Activated CD4-positive, alpha-beta memory T cell treated with anti-CD3 and anti-CD28 coated beads for 36 hours (primary cell): ENCODE measurements at regions of chr7 and their contacts with region 1.

Region 1: GRCh38 chr7:42940985-42941847 is 9.0 kb downstream of the MRPL32 start:
- DNase-seq: peak; percentile 84
- H3K4me3 Mint-ChIP-seq: no peak overlapping the region
- H3K27ac Mint-ChIP-seq: no peak overlapping the region
- H3K4me1 Mint-ChIP-seq: peaks cover 39% of the 10 kb centered on the region
- H3K27me3 Mint-ChIP-seq: no peaks in the 10 kb centered on the region

Region 2: DNA sequence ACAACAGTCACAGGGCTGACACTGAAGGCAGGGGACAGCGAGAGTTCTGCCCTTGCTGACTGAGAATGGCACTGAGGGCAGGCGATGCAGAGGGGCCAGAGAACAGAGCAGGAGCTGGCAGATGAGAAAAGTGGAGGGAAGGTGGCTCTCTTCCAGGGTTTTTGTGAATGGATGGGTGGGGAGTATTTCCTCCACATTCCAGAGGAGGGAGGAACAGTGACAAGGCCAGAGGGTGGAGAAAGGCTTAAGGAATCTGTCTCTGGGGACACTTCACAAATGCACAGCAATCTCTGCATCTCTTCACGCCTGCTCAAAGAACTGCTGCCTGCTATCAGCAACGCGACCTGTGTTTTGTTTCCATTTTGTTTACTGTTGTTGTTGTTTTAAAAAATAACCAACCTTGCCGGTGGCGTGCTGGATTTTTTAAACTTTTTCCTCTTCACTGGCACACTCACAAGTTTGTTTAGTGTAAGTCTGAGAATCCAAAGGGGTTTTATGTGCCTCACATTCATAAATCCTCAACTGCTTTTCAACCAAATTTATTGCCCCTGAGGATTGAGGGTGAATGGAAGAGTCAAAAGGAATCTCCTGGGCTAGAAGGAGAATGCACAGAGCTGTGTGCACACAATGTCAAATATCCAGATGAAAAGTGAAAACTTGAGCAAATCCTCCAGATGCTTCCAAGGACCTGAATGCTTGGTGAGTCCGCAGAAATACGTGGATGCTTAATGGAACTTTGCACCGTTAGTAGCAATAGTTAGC is 833.6 kb before region 1 on chr7:
- CTCF ChIA-PET with region 1: no interaction called
- POLR2A ChIA-PET with region 1: no interaction called
- intact Hi-C with region 1: no loop called
- DNase-seq: no peak
- H3K4me3 Mint-ChIP-seq: no peak overlapping the region
- H3K27ac Mint-ChIP-seq: no peak overlapping the region
- H3K4me1 Mint-ChIP-seq: no peaks in the 10 kb centered on the region
- H3K27me3 Mint-ChIP-seq: no peaks in the 10 kb centered on the region

Region 3: DNA sequence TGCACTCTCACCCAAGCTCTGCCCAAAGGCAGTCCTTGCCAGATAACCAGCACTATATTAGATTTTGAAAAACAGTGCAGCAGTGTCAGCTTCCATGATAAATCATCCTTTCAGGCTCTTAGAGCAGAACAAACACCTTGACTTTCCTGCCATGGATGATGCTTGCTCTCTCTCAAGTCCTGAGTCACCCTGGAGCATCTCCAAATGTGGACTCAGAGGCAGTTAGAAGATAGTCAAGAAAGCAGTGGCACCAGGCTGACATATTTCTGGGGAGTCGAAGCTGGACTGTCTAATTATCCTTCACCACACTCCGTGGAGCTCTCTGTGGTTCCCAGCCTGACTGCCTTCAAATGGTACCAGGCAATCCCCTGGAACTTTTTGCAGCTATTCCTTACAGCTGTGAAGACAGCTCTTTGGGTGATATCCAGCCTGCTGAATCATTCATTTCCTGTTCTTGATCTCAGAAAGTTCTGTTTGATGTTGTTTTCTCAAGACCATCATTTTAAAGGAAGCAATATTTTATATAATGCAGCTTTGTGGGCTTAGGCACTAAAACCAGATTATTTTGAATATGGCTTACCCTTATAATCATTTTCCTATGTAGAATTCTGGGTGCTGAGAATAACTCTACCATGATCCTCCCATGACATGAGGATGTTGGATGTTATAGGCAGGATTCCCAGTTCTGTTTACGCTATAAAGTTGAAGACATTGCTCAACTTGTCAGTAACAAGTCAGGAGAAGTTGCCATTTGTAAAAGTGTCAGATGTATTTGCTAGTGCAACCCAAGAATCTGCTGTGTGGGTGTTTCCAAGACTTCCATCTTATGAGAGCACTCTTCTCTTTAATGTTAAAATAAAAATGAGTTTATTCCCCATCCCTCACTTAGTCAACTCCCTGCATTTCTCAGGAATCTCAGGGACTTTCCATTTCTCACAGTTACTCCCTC is 263.2 kb before region 1 on chr7:
- CTCF ChIA-PET with region 1: no interaction called
- POLR2A ChIA-PET with region 1: no interaction called
- intact Hi-C with region 1: no loop called
- DNase-seq: no peak
- H3K4me3 Mint-ChIP-seq: no peak overlapping the region
- H3K27ac Mint-ChIP-seq: no peak overlapping the region
- H3K4me1 Mint-ChIP-seq: no peaks in the 10 kb centered on the region
- H3K27me3 Mint-ChIP-seq: no peaks in the 10 kb centered on the region

Region 4: GRCh38 chr7:43108255-43109011 is 167.2 kb after region 1 on chr7:
- CTCF ChIA-PET with region 1: interaction called, 3 read pairs
- POLR2A ChIA-PET with region 1: no interaction called
- intact Hi-C with region 1: loop called (anchors 1 kb)
- DNase-seq: peak; percentile 73
- H3K4me3 Mint-ChIP-seq: no peak overlapping the region
- H3K27ac Mint-ChIP-seq: no peak overlapping the region
- H3K4me1 Mint-ChIP-seq: peaks cover 2% of the 10 kb centered on the region
- H3K27me3 Mint-ChIP-seq: peaks cover 42% of the 10 kb centered on the region

Region 5: DNA sequence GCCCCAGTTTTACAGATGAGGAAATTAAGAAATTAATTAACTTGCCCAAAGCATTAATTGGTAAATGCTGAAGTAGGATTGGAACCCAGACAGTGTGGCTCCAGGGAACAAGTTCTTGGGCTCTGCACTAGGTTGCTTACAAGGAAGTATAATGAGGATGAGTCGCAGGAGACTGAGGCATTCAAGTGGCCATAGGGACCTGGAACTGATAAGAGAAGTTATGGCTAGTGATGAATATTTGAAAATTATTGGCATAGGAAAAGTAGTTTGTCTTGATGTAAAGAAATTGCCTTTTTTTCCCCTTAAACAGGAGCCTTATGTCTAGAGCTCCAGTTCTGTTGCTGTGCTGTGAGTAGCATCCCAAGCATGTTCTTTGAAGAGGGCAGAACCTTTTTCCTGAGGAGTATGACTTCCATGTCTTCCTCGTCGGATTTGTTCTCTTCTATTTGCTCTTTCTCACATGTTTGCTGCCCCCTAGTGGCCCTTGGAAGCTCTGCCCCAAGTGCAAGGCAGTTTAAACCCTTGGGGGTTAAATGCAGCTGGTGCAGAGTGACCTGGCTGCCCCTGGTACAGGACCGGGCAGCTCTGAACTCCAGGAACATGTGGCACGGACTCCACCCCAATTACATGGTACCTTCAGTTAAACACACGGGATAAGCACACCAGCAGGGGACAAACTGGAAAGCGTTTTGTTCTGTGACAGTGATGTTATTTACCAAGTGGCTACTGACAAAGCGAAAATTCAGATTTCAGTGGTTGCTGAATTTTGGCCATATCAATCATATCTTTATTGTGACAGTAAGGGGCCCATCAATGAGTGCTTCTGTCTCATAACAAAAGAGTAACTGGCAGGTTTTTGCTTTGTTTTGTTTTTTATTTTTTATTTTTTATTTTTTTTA is 320.0 kb after region 1 on chr7:
- CTCF ChIA-PET with region 1: interaction called, 25 read pairs
- POLR2A ChIA-PET with region 1: no interaction called
- intact Hi-C with region 1: loop called (anchors 1 kb)
- DNase-seq: peak; percentile 76
- H3K4me3 Mint-ChIP-seq: no peak overlapping the region
- H3K27ac Mint-ChIP-seq: no peak overlapping the region
- H3K4me1 Mint-ChIP-seq: no peaks in the 10 kb centered on the region
- H3K27me3 Mint-ChIP-seq: peaks cover 11% of the 10 kb centered on the region

Region 6: DNA sequence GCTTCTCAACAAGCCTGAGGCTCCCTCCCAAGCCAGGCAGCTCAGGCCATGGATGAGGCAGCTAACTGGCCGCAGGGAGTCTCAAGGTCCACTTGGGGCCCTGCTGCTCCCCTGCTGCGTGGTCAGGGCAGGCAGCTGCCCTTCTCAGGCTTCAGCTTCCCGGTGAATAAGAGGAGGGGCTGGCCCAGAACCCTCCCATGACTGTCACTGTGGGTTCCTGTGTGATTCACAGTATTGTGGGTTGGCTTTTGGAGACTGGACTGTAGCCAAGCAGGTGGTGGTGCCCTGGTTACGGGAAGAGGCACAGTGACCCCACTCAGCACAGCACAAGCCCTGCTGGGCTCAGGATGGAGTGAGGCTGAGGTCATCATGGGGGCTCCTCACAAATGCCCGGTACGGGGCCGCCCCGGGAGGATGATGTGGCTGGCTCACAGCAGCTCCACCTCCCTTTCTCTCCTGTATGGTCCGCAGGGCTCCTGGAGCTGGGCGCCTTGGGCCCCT is 361.0 kb after region 1 on chr7:
- CTCF ChIA-PET with region 1: interaction called, 3 read pairs
- POLR2A ChIA-PET with region 1: no interaction called
- intact Hi-C with region 1: loop called (anchors 2 kb)
- DNase-seq: peak; percentile 64
- H3K4me3 Mint-ChIP-seq: no peak overlapping the region
- H3K27ac Mint-ChIP-seq: no peak overlapping the region
- H3K4me1 Mint-ChIP-seq: peaks cover 31% of the 10 kb centered on the region
- H3K27me3 Mint-ChIP-seq: peaks cover 25% of the 10 kb centered on the region